Left colon (tissue), 2 donors: ENCODE measurements at regions of chr19 and their contacts with region 1.

Region 1: GRCh38 chr19:29735800-29736199 is 20.7 kb upstream of the C19orf12 start:
- DNase-seq: no peak
- ATAC-seq: no peak

Region 2: DNA sequence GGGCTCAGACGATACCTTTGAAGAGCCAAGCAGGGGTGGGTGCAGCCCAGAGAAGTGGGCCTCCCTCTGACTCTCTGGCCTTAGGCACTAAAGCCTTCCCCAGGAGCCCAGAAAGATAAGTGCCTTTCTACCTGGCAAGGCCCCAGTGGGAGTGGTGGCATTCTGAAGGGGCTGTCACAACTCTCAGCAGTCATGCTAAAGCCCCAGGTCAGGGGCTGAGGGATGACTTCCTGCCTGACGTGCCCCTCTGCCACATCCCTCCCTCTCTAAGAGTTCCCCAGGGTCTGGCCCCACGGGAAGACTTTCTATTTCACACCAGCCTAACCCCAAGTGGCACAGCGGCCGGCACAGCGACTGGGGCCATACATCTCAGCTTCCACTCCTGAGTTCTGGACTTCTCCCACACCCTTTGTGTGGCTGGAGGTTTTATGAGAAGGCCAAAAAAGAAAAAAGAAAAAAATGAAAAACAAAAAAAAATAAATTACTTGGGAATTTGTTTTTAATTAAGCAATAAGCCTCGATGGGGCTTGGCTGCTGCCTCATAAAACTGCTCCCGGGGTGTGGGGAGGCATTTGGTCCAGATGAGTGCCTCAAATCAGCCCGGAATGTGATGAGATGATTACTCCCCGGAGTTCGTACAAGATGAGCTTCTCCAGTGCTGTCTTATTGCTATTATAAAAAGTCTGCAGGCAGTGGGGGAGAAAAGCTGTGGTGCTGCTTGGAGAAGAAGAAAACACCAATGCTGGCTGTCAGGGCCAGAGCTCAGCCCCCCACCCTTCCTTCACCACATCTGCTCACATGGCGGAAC is 99.0 kb before region 1 on chr19:
- intact Hi-C with region 1: no loop called
- DNase-seq: no peak
- ATAC-seq: no peak

Region 3: DNA sequence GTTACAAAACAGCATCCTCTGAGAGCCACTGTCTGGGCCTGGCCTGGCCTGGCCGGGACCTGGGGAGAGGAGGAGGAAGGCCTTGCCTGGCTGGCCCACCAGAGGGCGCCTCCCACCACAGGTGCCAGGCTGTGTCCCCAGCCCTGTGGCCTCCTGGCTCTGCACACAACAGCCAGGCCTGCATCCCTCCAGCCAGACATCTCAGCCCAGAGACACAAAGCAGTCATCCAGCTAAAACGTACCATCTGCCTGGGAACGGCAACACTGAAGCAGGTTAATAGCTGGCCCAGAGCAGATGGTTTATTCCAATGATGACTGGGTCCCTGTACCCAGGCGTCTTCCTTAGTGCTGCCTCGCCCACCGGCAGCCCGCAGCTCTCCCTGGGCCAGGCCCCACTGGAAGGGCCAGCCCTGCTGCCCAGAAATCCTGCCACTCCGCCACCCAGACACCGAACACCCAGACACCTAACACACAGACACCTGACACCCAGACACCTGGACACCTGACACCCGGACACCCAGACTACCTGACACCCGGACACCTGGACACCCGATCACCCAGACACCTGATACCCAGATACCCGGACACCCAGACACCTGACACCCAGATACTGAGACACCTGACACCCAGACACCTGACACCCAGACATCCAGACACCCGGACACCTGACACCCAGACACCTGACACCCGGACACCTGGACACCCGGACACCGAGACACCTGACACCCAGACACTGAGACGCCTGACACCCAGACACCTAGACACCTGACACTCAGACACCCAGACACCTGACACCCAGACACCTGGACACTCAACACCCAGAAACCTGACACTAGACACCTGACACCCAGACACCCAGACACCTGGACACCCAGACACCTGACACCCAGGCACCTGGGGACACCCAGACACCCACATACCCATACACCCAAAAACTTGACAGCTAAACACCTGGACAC is 40.9 kb before region 1 on chr19:
- intact Hi-C with region 1: no loop called
- DNase-seq: peak; percentile 64 to 87
- ATAC-seq: peak; percentile 98

Region 4: GRCh38 chr19:29860492-29860891 is 124.7 kb after region 1 on chr19:
- intact Hi-C with region 1: loop called in 1 of 2 experiments (anchors 10 kb)
- DNase-seq: no peak
- ATAC-seq: no peak

Region 5: GRCh38 chr19:30202060-30202600 is 466.3 kb after region 1 on chr19:
- intact Hi-C with region 1: no loop called
- DNase-seq: no peak
- ATAC-seq: no peak